Caco-2 (cell line): ENCODE measurements at regions of chr6 and their contacts with region 1.

Region 1: DNA sequence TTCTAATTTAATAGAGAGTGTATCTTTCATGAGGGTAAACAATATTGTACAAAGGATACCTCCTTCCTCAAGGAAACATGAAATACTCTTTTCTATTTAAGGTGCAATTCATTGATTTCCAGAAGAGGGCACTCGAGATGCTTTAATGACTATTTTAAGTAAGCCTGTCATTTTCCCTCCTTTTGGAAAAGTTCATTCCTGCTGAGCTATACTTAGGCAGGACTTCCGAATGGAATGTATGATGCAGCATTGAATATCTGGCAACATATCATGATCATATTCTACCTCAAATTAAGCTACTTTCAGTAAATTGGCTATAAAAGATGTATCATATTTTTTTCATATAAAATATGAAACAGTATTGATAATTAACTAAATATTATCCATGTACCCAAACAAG is 5.0 kb downstream of the DST start:
- DNase-seq: peak in 1 of 2 experiments; percentile 47
- H3K4me3 ChIP-seq: no peak overlapping the region
- H3K4me3 Mint-ChIP-seq: no peak overlapping the region
- H3K27ac Mint-ChIP-seq: no peak overlapping the region
- H3K4me1 ChIP-seq: 0 out of 2 replicates have a peak, but pooled peaks cover 6% of the 10 kb centered on the region
- H3K4me1 Mint-ChIP-seq: peaks cover 7% of the 10 kb centered on the region
- H3K27me3 ChIP-seq: no peaks in the 10 kb centered on the region
- H3K27me3 Mint-ChIP-seq: no peaks in the 10 kb centered on the region
- CTCF ChIP-seq: peak; percentile 57 to 61

Region 2: GRCh38 chr6:56671651-56672461 is 34.2 kb after region 1 on chr6:
- CTCF ChIA-PET with region 1: interaction called, 6 read pairs
- POLR2A ChIA-PET with region 1: no interaction called
- intact Hi-C with region 1: loop called (anchors 2 kb)
- DNase-seq: no peak
- H3K4me3 ChIP-seq: no peak overlapping the region
- H3K4me3 Mint-ChIP-seq: no peak overlapping the region
- H3K27ac Mint-ChIP-seq: no peak overlapping the region
- H3K4me1 ChIP-seq: peaks cover 6% of the 10 kb centered on the region; the same call in 1 of the 2 replicates
- H3K4me1 Mint-ChIP-seq: peaks cover 8% of the 10 kb centered on the region
- H3K27me3 ChIP-seq: no peaks in the 10 kb centered on the region
- H3K27me3 Mint-ChIP-seq: no peaks in the 10 kb centered on the region
- CTCF ChIP-seq: no peak

Region 3: DNA sequence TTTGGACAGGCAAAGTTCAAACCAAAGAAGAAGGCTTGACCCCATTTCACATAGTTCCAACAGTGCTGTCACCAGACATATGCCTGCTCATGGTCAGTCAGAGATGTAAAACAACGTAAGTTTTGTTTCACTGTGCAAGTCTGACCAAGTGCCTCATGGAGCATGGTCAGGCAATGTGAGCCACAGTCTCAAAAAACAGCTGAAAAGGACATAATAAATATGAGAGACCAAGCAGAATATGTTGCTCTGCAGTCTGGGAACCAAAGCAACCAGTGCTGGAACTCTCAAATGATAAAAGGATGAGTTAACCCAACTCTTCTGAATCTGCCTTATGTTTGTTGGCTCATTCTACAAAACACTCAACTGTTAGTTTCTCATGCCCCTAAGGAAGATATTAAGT is 45.0 kb after region 1 on chr6:
- CTCF ChIA-PET with region 1: no interaction called
- POLR2A ChIA-PET with region 1: no interaction called
- intact Hi-C with region 1: no loop called
- DNase-seq: no peak
- H3K4me3 ChIP-seq: no peak overlapping the region
- H3K4me3 Mint-ChIP-seq: no peak overlapping the region
- H3K27ac Mint-ChIP-seq: no peak overlapping the region
- H3K4me1 ChIP-seq: peaks cover 25% of the 10 kb centered on the region
- H3K4me1 Mint-ChIP-seq: peaks cover 16% of the 10 kb centered on the region
- H3K27me3 ChIP-seq: no peaks in the 10 kb centered on the region
- H3K27me3 Mint-ChIP-seq: no peaks in the 10 kb centered on the region
- CTCF ChIP-seq: no peak

Region 4: DNA sequence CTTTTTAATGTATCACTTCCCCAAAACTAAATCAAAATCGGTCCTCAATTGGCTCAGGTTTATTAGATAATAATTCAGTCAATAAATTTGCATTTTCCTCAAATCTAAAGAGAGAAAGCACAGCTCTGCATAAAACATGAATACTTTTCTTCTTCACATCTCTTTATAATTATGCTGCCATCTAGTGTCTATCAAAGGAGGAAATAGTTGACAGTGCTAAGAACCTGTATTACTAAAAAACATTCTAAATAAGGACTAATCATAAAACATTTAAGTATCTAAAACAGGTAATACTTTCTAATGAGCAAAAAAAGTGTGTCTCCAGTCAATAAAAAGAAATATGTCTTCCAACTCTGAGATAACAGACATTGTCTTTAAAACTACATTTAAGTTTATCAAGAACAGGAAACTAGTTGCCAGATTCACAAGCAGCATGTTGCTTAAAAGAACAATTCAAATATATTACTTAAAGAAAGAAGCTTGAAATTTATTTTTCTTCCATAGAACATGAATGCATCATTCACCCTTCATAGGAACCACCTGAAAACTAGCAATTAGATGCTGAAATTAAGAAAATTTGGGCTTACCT is 61.5 kb after region 1 on chr6:
- CTCF ChIA-PET with region 1: interaction called, 8 read pairs
- POLR2A ChIA-PET with region 1: no interaction called
- intact Hi-C with region 1: loop called (anchors 1 kb)
- DNase-seq: no peak
- H3K4me3 ChIP-seq: no peak overlapping the region
- H3K4me3 Mint-ChIP-seq: no peak overlapping the region
- H3K27ac Mint-ChIP-seq: no peak overlapping the region
- H3K4me1 ChIP-seq: peaks cover 8% of the 10 kb centered on the region
- H3K4me1 Mint-ChIP-seq: peaks cover 7% of the 10 kb centered on the region
- H3K27me3 ChIP-seq: no peaks in the 10 kb centered on the region
- H3K27me3 Mint-ChIP-seq: no peaks in the 10 kb centered on the region
- CTCF ChIP-seq: peak; percentile 38 to 46

Region 5: DNA sequence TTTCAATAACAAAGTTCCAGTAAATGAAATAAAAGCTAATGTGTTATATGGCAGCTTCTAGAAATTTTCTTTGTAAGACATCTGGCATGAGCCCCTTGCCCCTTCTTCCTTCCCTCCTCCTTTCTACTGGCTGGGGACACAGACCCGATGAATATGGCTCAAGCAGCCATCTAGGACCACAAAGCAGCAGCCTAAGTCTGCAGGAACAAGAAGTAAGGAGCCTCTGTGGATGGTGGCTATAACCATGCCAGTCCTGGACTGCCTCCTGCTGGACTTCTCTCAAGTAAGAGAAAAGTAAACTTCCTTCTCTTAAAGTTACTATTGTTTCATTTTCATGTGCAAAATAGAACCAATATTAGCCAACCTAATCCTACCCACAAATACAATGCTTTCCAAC is 119.9 kb after region 1 on chr6:
- CTCF ChIA-PET with region 1: interaction called, 4 read pairs
- POLR2A ChIA-PET with region 1: no interaction called
- intact Hi-C with region 1: loop called (anchors 1 kb)
- DNase-seq: peak; percentile 42 to 51
- H3K4me3 ChIP-seq: no peak overlapping the region
- H3K4me3 Mint-ChIP-seq: no peak overlapping the region
- H3K27ac Mint-ChIP-seq: no peak overlapping the region
- H3K4me1 ChIP-seq: peaks cover 44% of the 10 kb centered on the region
- H3K4me1 Mint-ChIP-seq: peaks cover 28% of the 10 kb centered on the region
- H3K27me3 ChIP-seq: no peaks in the 10 kb centered on the region
- H3K27me3 Mint-ChIP-seq: no peaks in the 10 kb centered on the region
- CTCF ChIP-seq: peak; percentile 43 to 70

Region 6: DNA sequence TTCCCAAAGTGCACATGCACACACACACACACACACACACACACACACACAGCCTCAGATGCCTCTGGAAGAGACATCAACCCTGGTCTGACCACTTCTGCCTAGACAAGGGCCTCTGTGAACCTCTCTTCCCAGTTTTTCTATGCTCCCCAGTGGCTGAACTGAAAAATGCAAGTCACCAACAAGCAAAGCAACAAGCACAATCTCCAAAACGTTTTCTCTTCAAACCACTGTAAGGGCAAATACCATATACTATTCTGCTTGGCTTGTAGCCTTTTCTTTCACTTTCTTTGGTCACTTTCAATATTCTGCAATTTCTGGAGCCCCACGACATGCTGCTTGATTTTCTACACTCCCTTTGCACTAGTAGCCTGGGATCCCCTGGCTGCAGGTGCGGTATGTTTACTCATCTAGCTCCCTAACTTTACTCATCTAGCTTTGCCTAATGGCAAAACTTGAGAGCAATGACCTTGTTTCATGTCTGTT is 126.5 kb after region 1 on chr6:
- CTCF ChIA-PET with region 1: no interaction called
- POLR2A ChIA-PET with region 1: no interaction called
- intact Hi-C with region 1: loop called (anchors 2 kb)
- DNase-seq: peak; percentile 60 to 68
- H3K4me3 ChIP-seq: no peak overlapping the region
- H3K4me3 Mint-ChIP-seq: peak overlapping the region; percentile 25
- H3K27ac Mint-ChIP-seq: peak overlapping the region; percentile 72
- H3K4me1 ChIP-seq: peaks cover 37% of the 10 kb centered on the region
- H3K4me1 Mint-ChIP-seq: peaks cover 16% of the 10 kb centered on the region
- H3K27me3 ChIP-seq: no peaks in the 10 kb centered on the region
- H3K27me3 Mint-ChIP-seq: no peaks in the 10 kb centered on the region
- CTCF ChIP-seq: peak; percentile 47 to 50

Region 7: DNA sequence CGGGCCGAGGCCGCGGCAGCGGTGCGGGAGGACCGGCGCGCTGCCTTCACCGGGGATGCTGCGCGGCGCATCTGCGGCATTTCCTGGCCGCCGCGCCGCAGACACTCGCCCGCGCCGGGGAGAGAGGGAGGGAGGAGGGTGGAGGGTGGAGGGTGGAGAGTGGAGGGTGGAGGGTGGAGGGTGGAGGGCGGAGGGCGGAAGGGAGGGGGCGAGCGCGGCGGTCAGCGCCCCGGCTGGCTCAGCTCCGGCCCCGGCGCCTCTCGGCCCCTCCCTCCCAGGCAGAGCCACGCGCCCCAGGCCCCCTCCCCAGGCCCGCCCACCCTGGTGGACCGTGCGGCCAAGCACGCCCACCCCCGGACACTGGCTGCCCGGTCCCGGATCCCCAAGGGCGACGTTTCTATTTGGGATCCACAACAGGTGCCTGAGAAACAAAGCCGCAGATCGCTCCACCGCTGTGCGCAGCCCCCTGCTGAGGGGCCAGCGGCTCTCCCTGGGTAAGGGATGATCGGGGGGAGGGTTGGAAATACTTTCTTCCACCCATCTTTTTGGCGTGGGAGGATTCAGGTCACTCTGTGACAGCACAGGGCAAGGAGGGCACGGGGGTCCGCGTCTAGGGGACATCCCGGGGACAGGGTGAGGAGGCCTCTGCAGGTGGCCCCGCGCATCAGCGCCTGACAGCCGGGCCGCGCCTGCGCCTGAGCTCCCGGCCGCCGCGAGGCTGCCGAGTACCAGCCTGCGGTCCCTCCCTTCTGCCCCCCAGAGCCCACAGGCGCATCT is 206.1 kb after region 1 on chr6:
- CTCF ChIA-PET with region 1: no interaction called
- POLR2A ChIA-PET with region 1: no interaction called
- intact Hi-C with region 1: loop called (anchors 5 kb)
- DNase-seq: peak; percentile 82 to 89
- H3K4me3 ChIP-seq: peak overlapping the region; percentile 59
- H3K4me3 Mint-ChIP-seq: peak overlapping the region; percentile 85
- H3K27ac Mint-ChIP-seq: no peak overlapping the region
- H3K4me1 ChIP-seq: peaks cover 27% of the 10 kb centered on the region
- H3K4me1 Mint-ChIP-seq: peaks cover 7% of the 10 kb centered on the region
- H3K27me3 ChIP-seq: no peaks in the 10 kb centered on the region
- H3K27me3 Mint-ChIP-seq: no peaks in the 10 kb centered on the region
- CTCF ChIP-seq: peak; percentile 58 to 71

Region 8: GRCh38 chr6:56851541-56852259 is 214.1 kb after region 1 on chr6:
- CTCF ChIA-PET with region 1: interaction called, 11 read pairs
- POLR2A ChIA-PET with region 1: no interaction called
- intact Hi-C with region 1: loop called (anchors 1 kb)
- DNase-seq: peak in 1 of 2 experiments; percentile 56
- H3K4me3 ChIP-seq: no peak overlapping the region
- H3K4me3 Mint-ChIP-seq: no peak overlapping the region
- H3K27ac Mint-ChIP-seq: no peak overlapping the region
- H3K4me1 ChIP-seq: peaks cover 6% of the 10 kb centered on the region; the same call in 1 of the 2 replicates
- H3K4me1 Mint-ChIP-seq: peaks cover 10% of the 10 kb centered on the region
- H3K27me3 ChIP-seq: no peaks in the 10 kb centered on the region
- H3K27me3 Mint-ChIP-seq: no peaks in the 10 kb centered on the region
- CTCF ChIP-seq: peak; percentile 39 to 47